Ascending aorta (tissue), 2 donors: ENCODE measurements at regions of chr16 and their contacts with region 1.

Region 1: DNA sequence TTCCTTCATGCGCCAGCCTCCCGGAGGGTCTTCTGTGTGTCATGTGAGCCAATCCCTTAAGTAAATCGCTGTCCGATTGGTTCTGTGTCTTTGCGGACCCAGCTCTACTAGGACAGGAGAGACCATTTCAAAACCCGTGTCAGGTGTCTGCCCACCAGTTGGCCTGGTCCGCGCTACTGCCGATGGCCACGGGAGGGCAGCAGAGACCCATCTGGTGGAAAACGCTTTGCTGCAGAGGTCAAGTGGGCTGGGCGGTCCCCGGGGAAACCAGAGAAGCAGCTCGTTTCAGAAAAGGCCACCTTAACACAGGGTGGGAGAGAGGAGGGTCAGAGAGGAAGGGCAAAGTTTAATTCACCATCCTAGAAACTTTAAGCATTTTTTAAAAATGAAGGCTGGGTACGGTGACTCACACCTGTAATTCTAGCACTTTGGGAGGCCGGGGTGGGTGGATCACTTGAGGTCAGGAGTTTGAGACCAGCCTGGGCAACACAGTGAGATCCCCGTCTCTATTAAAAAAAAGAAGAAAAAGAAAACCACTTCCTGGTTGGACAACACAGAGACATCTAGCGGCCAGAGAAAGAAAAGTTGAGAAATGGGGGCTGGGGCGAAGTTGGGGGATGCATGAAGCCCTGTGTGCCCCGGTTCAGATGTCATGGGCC is 2.8 kb upstream of the CIBAR2 start:
- DNase-seq: peak in 1 of 2 donors; percentile 93
- H3K4me3 ChIP-seq: peak overlapping the region in 1 of 2 donors; percentile 42
- H3K27ac ChIP-seq: no peak overlapping the region
- H3K4me1 ChIP-seq: no peaks in the 10 kb centered on the region
- H3K27me3 ChIP-seq: no peaks in the 10 kb centered on the region
- CTCF ChIP-seq: peak; percentile 95 to 98 (median 96)

Region 2: GRCh38 chr16:85245307-85246172 is 130.5 kb after region 1 on chr16:
- intact Hi-C with region 1: loop called (anchors 5 kb)
- DNase-seq: peak in 1 of 2 donors; percentile 72
- H3K4me3 ChIP-seq: no peak overlapping the region
- H3K27ac ChIP-seq: no peak overlapping the region
- H3K4me1 ChIP-seq: peaks cover 0 to 3% of the 10 kb centered on the region in 2 donors
- H3K27me3 ChIP-seq: no peaks in the 10 kb centered on the region
- CTCF ChIP-seq: peak; percentile 72 to 95 (median 93)